Esophagus squamous epithelium (tissue), 5 donors: ENCODE measurements at regions of chr11 and their contacts with region 1.

Region 1: GRCh38 chr11:33065445-33066178 is 26.2 kb downstream of the TCP11L1 start:
- DNase-seq: no peak
- H3K4me3 ChIP-seq: no peak overlapping the region
- H3K27ac ChIP-seq: no peak overlapping the region
- H3K4me1 ChIP-seq: peaks cover 9 to 62% (median 37%) of the 10 kb centered on the region in 3 donors
- H3K27me3 ChIP-seq: no peaks in the 10 kb centered on the region
- CTCF ChIP-seq: peak; percentile 62 to 94 (median 87)
- POLR2A ChIP-seq: no peak

Region 2: DNA sequence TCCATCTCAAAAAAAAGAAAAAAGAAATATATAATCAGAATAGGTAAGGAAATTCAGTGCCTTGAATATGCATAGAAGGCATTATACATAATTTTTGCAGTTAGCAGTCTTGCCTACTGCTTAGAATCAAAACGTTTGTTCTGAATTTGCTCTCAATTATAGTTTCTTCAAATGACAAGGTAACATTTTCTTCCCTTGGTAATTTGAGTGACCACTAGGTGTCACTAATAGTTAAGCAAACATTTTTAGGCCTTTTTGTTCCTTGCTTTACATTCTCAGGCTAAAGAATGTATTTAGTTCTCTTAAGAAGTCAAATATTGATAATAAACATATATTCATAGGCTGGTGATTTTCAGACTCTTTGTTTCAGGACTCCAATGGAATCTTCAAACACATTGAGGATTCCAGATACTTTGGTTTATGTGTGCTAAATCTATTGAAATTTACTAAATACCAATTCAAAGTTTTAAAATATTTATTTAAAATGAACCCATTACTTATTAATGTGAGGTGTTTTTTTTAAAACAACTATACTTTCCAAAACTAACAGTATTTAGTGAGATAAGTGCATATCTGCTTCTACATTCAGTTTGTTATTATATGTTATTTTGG is 105.0 kb before region 1 on chr11:
- intact Hi-C with region 1: loop called (anchors 5 kb)
- DNase-seq: no peak
- H3K4me3 ChIP-seq: no peak overlapping the region
- H3K27ac ChIP-seq: no peak overlapping the region
- H3K4me1 ChIP-seq: no peaks in the 10 kb centered on the region
- H3K27me3 ChIP-seq: no peaks in the 10 kb centered on the region
- CTCF ChIP-seq: peak; percentile 51 to 79 (median 62)
- POLR2A ChIP-seq: no peak